ENCODE measurements at regions of chr1 and their contacts with region 1.

Region 1: DNA sequence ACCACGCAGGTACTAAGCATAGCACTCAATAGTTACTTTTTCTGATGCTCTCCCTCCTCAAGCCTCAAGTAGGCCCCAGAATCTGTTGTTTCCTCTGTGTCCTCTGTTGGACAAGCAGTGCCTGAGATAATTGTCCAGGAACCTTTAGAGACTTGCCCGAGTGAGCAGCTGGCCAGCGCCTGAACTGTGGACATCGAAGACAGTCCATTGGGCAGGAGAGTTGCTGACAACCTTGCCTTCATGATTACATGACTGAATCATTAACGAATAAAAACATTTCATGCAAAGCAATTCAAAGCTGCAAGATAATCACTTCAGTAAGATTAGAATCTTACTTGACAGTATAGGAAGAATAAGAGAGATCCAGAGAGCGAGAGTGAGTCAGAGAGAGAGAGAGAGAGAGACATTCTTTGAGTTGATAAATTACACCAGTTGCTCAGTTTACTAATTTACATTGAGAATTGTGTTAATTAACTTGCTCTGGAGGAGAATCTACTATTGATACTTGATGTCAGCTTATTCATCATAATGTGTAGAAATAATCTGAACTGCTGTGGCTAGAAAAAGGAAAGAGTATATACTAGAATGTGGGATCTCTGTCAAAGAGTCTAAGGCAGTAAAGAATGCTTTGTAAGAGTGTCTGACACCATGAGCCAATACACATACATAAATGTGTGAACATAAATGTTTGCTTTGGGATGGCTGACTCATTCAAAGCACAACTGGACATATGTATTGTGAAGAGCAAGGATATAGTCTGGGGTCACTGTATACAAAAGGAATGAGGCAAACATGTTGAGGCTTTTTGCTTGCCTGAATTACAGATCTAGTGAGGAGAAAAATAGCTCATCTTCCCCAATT is 216.0 kb downstream of the ZNF326 start:
- DNase-seq: no peak

Region 2: GRCh38 chr1:90817399-90817798 is 606.5 kb after region 1 on chr1:
- intact Hi-C with region 1: loop called in 1 of 2 experiments (anchors 5 kb)
- DNase-seq: no peak

Measured in posterior vena cava (tissue), 2 donors.